Caco-2 (cell line): ENCODE measurements at regions of chr11 and their contacts with region 1.

Region 1: GRCh38 chr11:31509429-31510345 is at the starts of genes ELP4 and IMMP1L:
- DNase-seq: peak; percentile 97 to 98
- H3K4me3 ChIP-seq: peak within 1 kb of the TSS; percentile 68
- H3K4me3 Mint-ChIP-seq: peak within 1 kb of the TSS; percentile 96
- H3K27ac Mint-ChIP-seq: peak within 1 kb of the TSS; percentile 97
- H3K4me1 ChIP-seq: peaks cover 10% of the 10 kb centered on the region; the same call in 1 of the 2 replicates
- H3K4me1 Mint-ChIP-seq: peaks cover 11% of the 10 kb centered on the region
- H3K27me3 ChIP-seq: no peaks in the 10 kb centered on the region
- H3K27me3 Mint-ChIP-seq: no peaks in the 10 kb centered on the region
- CTCF ChIP-seq: no peak
- total RNA-seq, gene ELP4: 15.3 and 18.8 TPM in 2 replicates
- total RNA-seq, gene IMMP1L: 38.6 and 40.1 TPM in 2 replicates

Region 2: GRCh38 chr11:31437742-31438435 is 71.8 kb before region 1 on chr11:
- CTCF ChIA-PET with region 1: no interaction called
- POLR2A ChIA-PET with region 1: no interaction called
- intact Hi-C with region 1: loop called (anchors 10 kb)
- DNase-seq: no peak
- H3K4me3 ChIP-seq: no peak overlapping the region
- H3K4me3 Mint-ChIP-seq: no peak overlapping the region
- H3K27ac Mint-ChIP-seq: no peak overlapping the region
- H3K4me1 ChIP-seq: no peaks in the 10 kb centered on the region
- H3K4me1 Mint-ChIP-seq: no peaks in the 10 kb centered on the region
- H3K27me3 ChIP-seq: no peaks in the 10 kb centered on the region
- H3K27me3 Mint-ChIP-seq: no peaks in the 10 kb centered on the region
- CTCF ChIP-seq: no peak

Region 3: GRCh38 chr11:31810779-31811647 is 301.3 kb after region 1 on chr11 and contains the start of gene PAX6:
- CTCF ChIA-PET with region 1: no interaction called
- POLR2A ChIA-PET with region 1: no interaction called
- intact Hi-C with region 1: loop called (anchors 10 kb)
- DNase-seq: peak; percentile 61 to 73
- H3K4me3 ChIP-seq: peak within 1 kb of the TSS; percentile 28
- H3K4me3 Mint-ChIP-seq: peak within 1 kb of the TSS; percentile 88
- H3K27ac Mint-ChIP-seq: no peak within 1 kb of the TSS
- H3K4me1 ChIP-seq: peaks cover 27% of the 10 kb centered on the region
- H3K4me1 Mint-ChIP-seq: peaks cover 21% of the 10 kb centered on the region
- H3K27me3 ChIP-seq: peaks cover 26% of the 10 kb centered on the region
- H3K27me3 Mint-ChIP-seq: peaks cover 48% of the 10 kb centered on the region
- CTCF ChIP-seq: no peak
- total RNA-seq, gene PAX6: 0.43 and 0.74 TPM in 2 replicates